Colonic mucosa (tissue), 4 donors: ENCODE measurements at regions of chr7 and their contacts with region 1.

Region 1: DNA sequence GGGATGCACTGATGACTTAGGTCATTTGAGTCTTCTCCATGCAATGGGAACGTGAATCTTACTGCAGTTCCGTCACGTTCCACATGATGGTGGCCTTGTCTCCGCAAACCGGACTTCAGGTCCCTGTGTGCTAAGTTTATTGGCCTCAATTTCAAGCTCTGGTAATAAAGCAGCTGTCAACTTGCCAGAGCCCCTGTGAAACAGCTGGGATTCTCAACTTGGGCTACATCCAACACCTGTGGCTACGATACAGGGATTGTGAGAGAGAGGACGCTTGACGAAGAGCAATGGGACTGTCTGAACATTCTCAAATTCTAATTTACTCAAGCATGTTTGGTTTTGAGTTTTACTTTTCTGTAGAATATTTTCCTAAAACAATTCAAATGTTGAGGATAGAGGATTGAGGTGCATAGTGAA is 174.2 kb downstream of the PTN start:
- DNase-seq: peak; percentile 38
- H3K4me3 ChIP-seq: no peak overlapping the region
- H3K27ac ChIP-seq: no peak overlapping the region
- H3K4me1 ChIP-seq: no peaks in the 10 kb centered on the region
- H3K27me3 ChIP-seq: no peaks in the 10 kb centered on the region
- CTCF ChIP-seq: peak; percentile 32

Region 2: GRCh38 chr7:137454246-137454724 is 285.0 kb after region 1 on chr7:
- intact Hi-C with region 1: loop called (anchors 5 kb)
- DNase-seq: no peak
- H3K4me3 ChIP-seq: no peak overlapping the region
- H3K27ac ChIP-seq: no peak overlapping the region
- H3K4me1 ChIP-seq: no peaks in the 10 kb centered on the region
- H3K27me3 ChIP-seq: no peaks in the 10 kb centered on the region
- CTCF ChIP-seq: peak; percentile 52